PC-3 (cell line): ENCODE measurements at regions of chr14 and their contacts with region 1.

Region 1: GRCh38 chr14:99729991-99730868 is 46.1 kb downstream of the CYP46A1 start:
- DNase-seq: peak; percentile 76
- ATAC-seq: peak; percentile 81
- H3K4me3 ChIP-seq: peak overlapping the region; percentile 68
- H3K27ac ChIP-seq: no peak overlapping the region
- H3K4me1 ChIP-seq: no peaks in the 10 kb centered on the region; the same call in 1 of the 2 replicates
- H3K27me3 ChIP-seq: no peaks in the 10 kb centered on the region
- CTCF ChIP-seq: peak; percentile 82

Region 2: GRCh38 chr14:99755629-99756603 is 25.7 kb after region 1 on chr14:
- CTCF ChIA-PET with region 1: interaction called, 4 read pairs
- POLR2A ChIA-PET with region 1: no interaction called
- intact Hi-C with region 1: loop called (anchors 2 kb)
- DNase-seq: peak; percentile 86
- ATAC-seq: peak; percentile 52
- H3K4me3 ChIP-seq: no peak overlapping the region
- H3K27ac ChIP-seq: peak overlapping the region; percentile 74
- H3K4me1 ChIP-seq: peaks cover 71% of the 10 kb centered on the region
- H3K27me3 ChIP-seq: no peaks in the 10 kb centered on the region
- CTCF ChIP-seq: no peak

Region 3: GRCh38 chr14:99884834-99885648 is 154.8 kb after region 1 on chr14:
- CTCF ChIA-PET with region 1: no interaction called
- POLR2A ChIA-PET with region 1: no interaction called
- intact Hi-C with region 1: loop called (anchors 1 kb)
- DNase-seq: peak; percentile 76
- ATAC-seq: peak; percentile 82
- H3K4me3 ChIP-seq: no peak overlapping the region
- H3K27ac ChIP-seq: no peak overlapping the region
- H3K4me1 ChIP-seq: peaks cover 5% of the 10 kb centered on the region
- H3K27me3 ChIP-seq: no peaks in the 10 kb centered on the region
- CTCF ChIP-seq: peak; percentile 90